PC-9 (cell line): ENCODE measurements at regions of chr12 and their contacts with region 1.

Region 1: DNA sequence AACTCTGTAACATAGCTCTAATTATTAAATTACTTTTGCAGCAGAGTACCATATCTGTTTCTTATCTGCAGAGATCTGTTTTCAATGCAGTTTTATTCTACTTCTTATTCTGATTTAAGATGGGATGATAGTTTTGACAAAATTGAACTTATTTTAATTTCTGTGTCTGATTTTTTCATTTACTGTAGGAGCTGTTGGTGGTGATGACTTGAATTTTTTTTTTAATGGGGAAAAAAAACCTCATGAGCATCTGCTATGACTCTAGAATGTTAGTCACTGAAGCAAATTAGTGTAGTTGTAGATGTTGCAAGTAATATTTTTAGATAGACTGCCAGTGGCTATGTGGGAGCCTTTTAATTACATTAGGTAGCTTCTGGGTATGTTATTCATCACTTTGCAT is 23.4 kb downstream of the DNM1L start:
- DNase-seq: no peak
- H3K4me3 ChIP-seq: no peak overlapping the region
- H3K27ac ChIP-seq: no peak overlapping the region
- H3K4me1 ChIP-seq: no peaks in the 10 kb centered on the region
- H3K27me3 ChIP-seq: no peaks in the 10 kb centered on the region
- CTCF ChIP-seq: no peak

Region 2: DNA sequence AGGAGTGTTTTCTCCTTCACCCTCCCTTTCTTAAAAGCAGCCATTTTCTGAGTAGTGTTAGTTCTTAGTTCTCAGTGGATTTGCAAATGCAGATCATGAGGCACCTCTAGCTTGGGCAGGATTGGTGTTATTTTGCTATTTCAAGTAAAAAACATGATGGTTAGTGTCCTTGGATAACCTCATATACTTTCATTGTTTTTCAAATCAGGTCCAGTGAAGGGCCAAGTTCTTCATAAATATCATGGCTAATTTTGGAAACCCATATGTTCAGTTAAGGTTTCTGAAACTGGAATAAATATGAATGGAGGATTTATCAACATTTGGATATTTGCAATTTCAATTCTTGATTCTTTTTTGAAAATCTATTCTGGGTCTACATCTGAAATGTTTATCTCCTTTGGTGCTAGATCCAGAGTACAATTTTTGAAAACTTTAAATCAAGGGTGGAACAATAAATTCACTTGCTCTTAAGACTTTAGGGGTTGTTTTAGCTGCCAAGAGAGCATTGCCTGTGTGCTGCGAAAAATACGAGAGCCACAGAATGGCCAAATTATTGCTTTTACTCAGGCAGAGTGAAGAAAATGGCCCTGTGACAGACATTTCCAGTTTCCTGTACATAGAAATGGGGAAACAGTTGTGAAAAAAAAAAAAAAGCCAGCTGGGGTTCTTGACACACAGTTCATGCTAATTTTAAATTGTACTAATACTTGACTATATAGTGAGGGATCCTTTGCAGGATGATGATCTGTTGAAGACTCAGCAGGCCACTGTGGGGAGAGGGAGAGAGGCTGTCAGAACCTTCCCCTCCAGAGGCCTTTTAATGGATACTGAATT is 491.2 kb before region 1 on chr12:
- CTCF ChIA-PET with region 1: no interaction called
- POLR2A ChIA-PET with region 1: no interaction called
- intact Hi-C with region 1: no loop called
- DNase-seq: no peak
- H3K4me3 ChIP-seq: no peak overlapping the region
- H3K27ac ChIP-seq: no peak overlapping the region
- H3K4me1 ChIP-seq: no peaks in the 10 kb centered on the region
- H3K27me3 ChIP-seq: no peaks in the 10 kb centered on the region
- CTCF ChIP-seq: no peak

Region 3: GRCh38 chr12:32595251-32595650 is 107.2 kb before region 1 on chr12:
- CTCF ChIA-PET with region 1: no interaction called
- POLR2A ChIA-PET with region 1: no interaction called
- intact Hi-C with region 1: no loop called
- DNase-seq: peak in 1 of 2 experiments; percentile 77
- H3K4me3 ChIP-seq: no peak overlapping the region
- H3K27ac ChIP-seq: no peak overlapping the region
- H3K4me1 ChIP-seq: no peaks in the 10 kb centered on the region
- H3K27me3 ChIP-seq: no peaks in the 10 kb centered on the region
- CTCF ChIP-seq: no peak

Region 4: GRCh38 chr12:32659908-32660440 is 42.5 kb before region 1 on chr12:
- CTCF ChIA-PET with region 1: no interaction called
- POLR2A ChIA-PET with region 1: no interaction called
- intact Hi-C with region 1: no loop called
- DNase-seq: no peak
- H3K4me3 ChIP-seq: no peak overlapping the region
- H3K27ac ChIP-seq: no peak overlapping the region
- H3K4me1 ChIP-seq: no peaks in the 10 kb centered on the region
- H3K27me3 ChIP-seq: no peaks in the 10 kb centered on the region
- CTCF ChIP-seq: no peak

Region 5: GRCh38 chr12:34257093-34257492 is 1554.6 kb after region 1 on chr12:
- CTCF ChIA-PET with region 1: no interaction called
- POLR2A ChIA-PET with region 1: interaction called, 18 read pairs
- intact Hi-C with region 1: no loop called
- DNase-seq: no peak
- H3K4me3 ChIP-seq: no peak overlapping the region
- H3K27ac ChIP-seq: no peak overlapping the region
- H3K4me1 ChIP-seq: peaks cover 8% of the 10 kb centered on the region
- H3K27me3 ChIP-seq: no peaks in the 10 kb centered on the region
- CTCF ChIP-seq: 0 out of 2 replicates have a peak, but pooled peaks have one; percentile 18